ENCODE measurements at regions of chr3 and their contacts with region 1.

Region 1: DNA sequence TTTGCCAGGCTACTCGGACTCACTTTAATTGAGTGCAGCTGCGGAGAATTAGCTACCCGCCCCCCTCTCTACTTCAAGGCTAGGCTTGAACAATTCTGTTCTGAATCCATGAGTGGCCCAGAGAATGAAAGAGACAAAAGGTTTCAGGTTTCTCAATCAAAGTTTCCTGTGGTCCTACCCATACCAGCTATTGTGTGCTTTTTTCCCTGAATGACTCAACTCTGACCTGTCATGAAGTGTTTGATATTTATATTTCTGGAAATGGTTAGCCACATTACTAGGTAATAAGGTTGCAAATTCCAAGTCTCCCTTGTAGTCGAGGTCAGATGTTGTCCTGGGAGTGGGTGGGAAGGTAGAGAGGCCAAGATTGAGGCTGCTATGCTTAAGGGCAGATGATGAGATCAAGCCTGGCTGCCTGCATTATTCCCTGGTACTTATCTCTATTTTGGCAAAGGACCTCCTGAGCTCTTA is 392.7 kb upstream of the TBL1XR1 start:
- DNase-seq: peak; percentile 50
- H3K4me3 Mint-ChIP-seq: peak overlapping the region; percentile 25
- H3K27ac Mint-ChIP-seq: peak overlapping the region; percentile 76
- H3K4me1 Mint-ChIP-seq: peaks cover 52% of the 10 kb centered on the region
- H3K27me3 Mint-ChIP-seq: no peaks in the 10 kb centered on the region
- CTCF ChIP-seq: no peak

Region 2: DNA sequence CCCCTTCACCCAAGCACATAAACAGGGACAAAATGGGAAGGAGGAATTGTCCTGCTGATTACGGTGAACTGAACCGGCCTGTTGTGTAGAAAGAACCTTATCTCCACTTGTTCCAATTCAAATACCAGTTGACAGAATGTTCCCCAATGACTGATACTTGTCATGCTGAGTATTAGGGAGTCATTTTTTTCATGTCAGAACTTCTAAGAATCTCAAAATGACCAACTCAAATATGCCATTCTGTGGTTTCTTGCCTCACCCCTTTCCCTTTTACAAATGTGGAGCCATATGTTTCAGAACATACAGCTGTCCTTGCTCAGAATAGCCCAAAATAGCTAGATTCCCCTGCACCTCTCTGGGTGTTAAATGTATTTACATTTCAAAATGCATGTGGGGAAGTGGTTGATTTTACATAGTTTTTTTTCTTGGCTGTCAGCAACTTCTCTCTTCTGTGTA is 13.2 kb after region 1 on chr3:
- CTCF ChIA-PET with region 1: interaction called, 19 read pairs
- intact Hi-C with region 1: no loop called
- DNase-seq: no peak
- H3K4me3 Mint-ChIP-seq: no peak overlapping the region
- H3K27ac Mint-ChIP-seq: peak overlapping the region; percentile 59
- H3K4me1 Mint-ChIP-seq: peaks cover 48% of the 10 kb centered on the region
- H3K27me3 Mint-ChIP-seq: no peaks in the 10 kb centered on the region
- CTCF ChIP-seq: no peak